Dendritic cell treated with granulocyte-macrophage colony-stimulating factor and Interleukin-4, amounts not matched to agents 40 ng/mL and 50 ng/mL, for 4 days (primary cell): ENCODE measurements at regions of chr4 and their contacts with region 1.

Region 1: DNA sequence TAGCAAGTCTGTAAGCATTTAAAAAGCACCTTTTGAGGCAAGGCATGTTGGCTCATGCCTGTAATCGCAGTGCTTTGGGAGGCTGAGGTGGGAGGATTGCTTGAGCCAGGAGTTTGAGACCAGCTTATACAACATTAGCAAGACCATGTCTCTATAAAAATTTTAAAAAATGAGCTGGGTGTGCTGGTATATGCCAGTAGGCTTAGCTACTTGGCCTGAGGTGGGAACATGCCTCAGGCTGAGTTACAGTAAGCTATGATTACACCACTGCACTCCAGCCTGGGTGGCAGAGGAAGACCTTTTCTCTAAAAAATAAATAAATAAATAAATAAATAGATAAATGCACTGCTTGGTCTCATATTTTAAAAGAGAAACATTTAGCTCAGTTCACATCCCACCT is 26.8 kb downstream of the BLTP1 start:
- H3K4me3 Mint-ChIP-seq: no peak overlapping the region
- H3K27ac Mint-ChIP-seq: no peak overlapping the region
- H3K4me1 Mint-ChIP-seq: no peaks in the 10 kb centered on the region
- H3K27me3 Mint-ChIP-seq: no peaks in the 10 kb centered on the region

Region 2: DNA sequence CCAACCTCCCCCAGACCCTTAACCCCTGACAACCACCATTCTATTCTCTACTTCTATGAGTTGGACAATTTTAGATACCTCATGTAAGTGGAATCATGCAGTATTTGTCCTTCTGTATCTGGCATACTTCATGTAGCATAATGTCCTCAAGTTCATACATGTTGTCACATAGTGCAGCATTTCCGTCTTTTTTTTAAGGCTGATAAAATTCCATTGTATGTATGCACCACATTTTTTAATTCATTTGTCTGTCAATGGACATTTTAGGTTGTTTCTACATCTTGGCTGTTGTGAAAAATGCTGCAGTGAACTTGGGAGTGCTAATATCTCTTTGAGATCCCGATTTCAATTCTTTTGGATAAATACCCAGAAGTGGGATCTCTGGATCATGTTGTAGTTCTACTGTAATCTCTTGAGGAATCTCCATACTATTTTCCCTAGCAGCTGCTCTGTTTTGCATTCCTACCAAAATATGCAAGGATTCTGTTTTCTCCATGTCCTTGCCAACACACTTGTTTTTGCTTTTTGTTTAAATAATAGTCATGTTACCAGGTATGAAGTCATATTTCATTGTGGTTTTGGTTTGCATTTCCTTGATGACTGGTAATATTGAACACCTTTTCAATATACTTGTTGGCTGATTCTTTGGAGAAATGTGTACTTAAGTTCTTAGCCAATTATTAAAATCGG is 151.1 kb after region 1 on chr4:
- intact Hi-C with region 1: loop called (anchors 10 kb)
- H3K4me3 Mint-ChIP-seq: no peak overlapping the region
- H3K27ac Mint-ChIP-seq: no peak overlapping the region
- H3K4me1 Mint-ChIP-seq: no peaks in the 10 kb centered on the region
- H3K27me3 Mint-ChIP-seq: no peaks in the 10 kb centered on the region